Activated T-helper 1 cell treated with anti-CD3 and anti-CD28 coated beads, Interleukin-12 subunit alpha, Interleukin-12 subunit beta, Interleukin-2, Interleukin-4 antibody, amounts not matched to agents 30 ng/mL and 10 ng/mL and 1 ng/mL, durations not matched to agents 14 hours and 24 hours and 36 hours (primary cell): ENCODE measurements at regions of chr6 and their contacts with region 1.

Region 1: GRCh38 chr6:87682310-87682709 is 19.7 kb downstream of the AKIRIN2 start:
- DNase-seq: no peak
- H3K4me3 Mint-ChIP-seq: no peak overlapping the region
- H3K27ac Mint-ChIP-seq: no peak overlapping the region
- H3K4me1 Mint-ChIP-seq: peaks cover 48% of the 10 kb centered on the region
- H3K27me3 Mint-ChIP-seq: no peaks in the 10 kb centered on the region

Region 2: GRCh38 chr6:87653074-87653962 is 29.0 kb before region 1 on chr6:
- intact Hi-C with region 1: loop called (anchors 2 kb)
- DNase-seq: no peak
- H3K4me3 Mint-ChIP-seq: peak overlapping the region; percentile 53
- H3K27ac Mint-ChIP-seq: peak overlapping the region; percentile 87
- H3K4me1 Mint-ChIP-seq: peaks cover 38% of the 10 kb centered on the region
- H3K27me3 Mint-ChIP-seq: no peaks in the 10 kb centered on the region